Activated CD4-positive, alpha-beta T cell treated with anti-CD3 and anti-CD28 coated beads, Interleukin-2, amount 10 ng/mL, durations not matched to agents 7 days and 5 days (primary cell): ENCODE measurements at regions of chr1 and their contacts with region 1.

Region 1: DNA sequence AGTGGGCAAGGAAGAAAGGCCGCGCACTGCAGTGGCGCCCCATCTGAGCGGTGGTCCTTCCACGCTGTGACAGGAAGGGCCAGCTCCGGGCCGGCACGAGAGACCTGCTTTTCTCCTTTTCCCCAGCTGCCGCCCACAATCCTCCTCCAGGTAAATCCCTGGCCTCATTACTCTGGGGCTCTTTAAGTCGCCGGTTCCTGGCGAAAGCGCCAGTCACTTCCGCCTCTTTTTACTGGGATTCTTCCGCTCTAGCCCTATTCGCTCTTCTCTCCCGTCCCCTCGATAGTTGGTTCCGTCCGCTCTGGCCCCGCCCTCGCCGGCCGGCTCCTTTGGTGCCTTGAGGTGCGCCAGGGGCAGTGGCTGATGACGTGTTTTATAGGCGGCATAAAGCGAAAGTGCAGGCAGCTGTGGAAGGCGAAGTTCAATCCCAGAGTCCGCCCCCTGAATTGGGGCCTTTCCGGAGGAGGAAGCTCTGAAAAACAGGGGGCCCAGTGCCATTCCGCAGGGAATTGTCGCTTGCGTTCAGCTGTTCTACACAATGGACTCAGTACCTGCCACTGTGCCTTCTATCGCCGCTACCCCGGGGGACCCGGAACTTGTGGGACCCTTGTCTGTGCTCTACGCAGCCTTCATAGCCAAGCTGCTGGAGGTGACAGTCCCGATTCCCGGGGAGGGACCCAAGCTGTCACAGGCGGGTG is 26.2 kb downstream of the MIA3 start:
- DNase-seq: peak; percentile 98
- H3K4me3 Mint-ChIP-seq: peak overlapping the region; percentile 100
- H3K27ac Mint-ChIP-seq: peak overlapping the region; percentile 100
- H3K4me1 Mint-ChIP-seq: peaks cover 41% of the 10 kb centered on the region
- H3K27me3 Mint-ChIP-seq: no peaks in the 10 kb centered on the region

Region 2: GRCh38 chr1:222654849-222655248 is 10.8 kb after region 1 on chr1:
- CTCF ChIA-PET with region 1: interaction called, 10 read pairs
- POLR2A ChIA-PET with region 1: interaction called, 4 read pairs
- DNase-seq: peak; percentile 85
- H3K4me3 Mint-ChIP-seq: peak overlapping the region; percentile 46
- H3K27ac Mint-ChIP-seq: peak overlapping the region; percentile 95
- H3K4me1 Mint-ChIP-seq: peaks cover 64% of the 10 kb centered on the region
- H3K27me3 Mint-ChIP-seq: no peaks in the 10 kb centered on the region

Region 3: DNA sequence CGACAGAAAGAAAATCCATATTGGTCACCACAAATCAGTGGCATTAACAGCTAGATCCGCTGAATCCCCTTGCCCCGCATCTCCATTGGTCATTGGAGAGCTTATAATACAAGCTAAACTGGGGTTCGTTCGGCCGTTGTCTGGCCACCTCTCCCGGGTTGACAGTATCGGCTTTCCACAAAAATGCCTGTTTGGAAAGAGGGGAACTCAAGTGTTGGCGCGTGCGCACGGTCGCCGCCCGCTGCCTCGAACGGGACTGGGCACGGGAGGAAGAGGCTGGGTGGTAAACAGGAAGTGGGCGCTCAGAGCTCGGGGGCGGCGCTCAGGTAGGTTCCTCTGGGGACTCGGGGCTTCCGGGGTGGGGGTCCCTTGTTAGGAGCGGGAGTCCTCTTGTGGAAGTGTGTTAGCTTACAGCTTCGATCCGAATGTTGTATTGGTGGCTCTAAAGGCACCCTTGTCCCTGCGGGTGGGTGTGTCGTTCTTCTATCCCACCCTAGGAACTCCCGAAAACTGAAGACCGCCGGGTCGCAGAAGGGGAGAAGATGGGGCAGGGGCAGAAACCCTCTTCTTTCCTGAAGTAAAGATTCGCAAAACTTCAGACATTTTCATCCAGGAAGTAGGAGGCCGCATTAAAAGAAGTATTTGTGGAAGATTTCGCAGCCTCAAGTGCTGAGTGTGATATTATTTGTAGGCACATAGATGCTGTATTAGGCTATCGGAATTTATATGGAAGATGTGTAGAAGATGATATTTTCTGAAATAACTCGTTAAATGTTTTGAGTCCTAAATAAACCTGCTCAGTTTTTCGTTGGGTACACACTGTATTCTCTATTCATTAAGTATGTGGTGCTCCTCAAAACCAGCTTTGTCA is 69.2 kb after region 1 on chr1:
- CTCF ChIA-PET with region 1: no interaction called
- POLR2A ChIA-PET with region 1: no interaction called
- DNase-seq: peak; percentile 93
- H3K4me3 Mint-ChIP-seq: peak overlapping the region; percentile 100
- H3K27ac Mint-ChIP-seq: peak overlapping the region; percentile 99
- H3K4me1 Mint-ChIP-seq: peaks cover 49% of the 10 kb centered on the region
- H3K27me3 Mint-ChIP-seq: no peaks in the 10 kb centered on the region